Activated naive CD4-positive, alpha-beta T cell treated with anti-CD3 and anti-CD28 coated beads for 36 hours (primary cell): ENCODE measurements at regions of chr2 and their contacts with region 1.

Region 1: GRCh38 chr2:201071479-201072200 is at the starts of genes HYCC2 and NDUFB3:
- DNase-seq: peak; percentile 96
- H3K4me3 Mint-ChIP-seq: peak within 1 kb of the TSS; percentile 96
- H3K27ac Mint-ChIP-seq: peak within 1 kb of the TSS; percentile 92
- H3K4me1 Mint-ChIP-seq: peaks cover 51% of the 10 kb centered on the region
- H3K27me3 Mint-ChIP-seq: no peaks in the 10 kb centered on the region
- total RNA-seq, gene HYCC2: 19.1 TPM
- total RNA-seq, gene NDUFB3: 159 to 162 TPM

Region 2: GRCh38 chr2:200703127-200703925 is 368.3 kb before region 1 on chr2:
- CTCF ChIA-PET with region 1: interaction called, 3 read pairs
- intact Hi-C with region 1: loop called (anchors 2 kb)
- DNase-seq: peak; percentile 68
- H3K4me3 Mint-ChIP-seq: peak overlapping the region; percentile 19
- H3K27ac Mint-ChIP-seq: peak overlapping the region; percentile 83
- H3K4me1 Mint-ChIP-seq: peaks cover 55% of the 10 kb centered on the region
- H3K27me3 Mint-ChIP-seq: peaks cover 1% of the 10 kb centered on the region

Region 3: GRCh38 chr2:200901459-200902072 is 170.1 kb before region 1 on chr2:
- CTCF ChIA-PET with region 1: interaction called, 104 read pairs
- intact Hi-C with region 1: loop called (anchors 1 kb)
- DNase-seq: peak; percentile 89
- H3K4me3 Mint-ChIP-seq: no peak overlapping the region
- H3K27ac Mint-ChIP-seq: peak overlapping the region; percentile 84
- H3K4me1 Mint-ChIP-seq: peaks cover 7% of the 10 kb centered on the region
- H3K27me3 Mint-ChIP-seq: no peaks in the 10 kb centered on the region

Region 4: DNA sequence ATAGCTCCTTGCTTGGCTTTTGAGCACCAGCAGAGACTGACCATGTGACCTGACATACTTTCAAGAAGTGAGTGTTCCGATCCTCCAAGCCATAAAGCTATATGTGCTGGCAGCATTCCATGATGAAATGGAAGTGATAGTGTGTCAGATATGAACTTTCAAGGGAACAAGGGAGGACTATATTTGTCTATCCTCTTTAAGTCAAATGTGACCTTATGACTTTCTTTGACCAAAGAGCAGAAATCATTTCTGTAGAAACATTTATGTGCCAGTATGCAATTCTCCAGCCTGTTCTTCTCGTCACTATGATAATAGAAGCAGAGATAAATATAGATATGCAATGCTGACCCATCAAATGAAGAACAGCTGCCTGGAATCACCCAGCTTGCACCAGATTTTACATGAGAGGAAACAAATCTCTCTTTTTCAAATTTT is 14.5 kb before region 1 on chr2:
- CTCF ChIA-PET with region 1: interaction called, 15 read pairs
- intact Hi-C with region 1: no loop called
- DNase-seq: no peak
- H3K4me3 Mint-ChIP-seq: no peak overlapping the region
- H3K27ac Mint-ChIP-seq: no peak overlapping the region
- H3K4me1 Mint-ChIP-seq: peaks cover 21% of the 10 kb centered on the region
- H3K27me3 Mint-ChIP-seq: no peaks in the 10 kb centered on the region

Region 5: DNA sequence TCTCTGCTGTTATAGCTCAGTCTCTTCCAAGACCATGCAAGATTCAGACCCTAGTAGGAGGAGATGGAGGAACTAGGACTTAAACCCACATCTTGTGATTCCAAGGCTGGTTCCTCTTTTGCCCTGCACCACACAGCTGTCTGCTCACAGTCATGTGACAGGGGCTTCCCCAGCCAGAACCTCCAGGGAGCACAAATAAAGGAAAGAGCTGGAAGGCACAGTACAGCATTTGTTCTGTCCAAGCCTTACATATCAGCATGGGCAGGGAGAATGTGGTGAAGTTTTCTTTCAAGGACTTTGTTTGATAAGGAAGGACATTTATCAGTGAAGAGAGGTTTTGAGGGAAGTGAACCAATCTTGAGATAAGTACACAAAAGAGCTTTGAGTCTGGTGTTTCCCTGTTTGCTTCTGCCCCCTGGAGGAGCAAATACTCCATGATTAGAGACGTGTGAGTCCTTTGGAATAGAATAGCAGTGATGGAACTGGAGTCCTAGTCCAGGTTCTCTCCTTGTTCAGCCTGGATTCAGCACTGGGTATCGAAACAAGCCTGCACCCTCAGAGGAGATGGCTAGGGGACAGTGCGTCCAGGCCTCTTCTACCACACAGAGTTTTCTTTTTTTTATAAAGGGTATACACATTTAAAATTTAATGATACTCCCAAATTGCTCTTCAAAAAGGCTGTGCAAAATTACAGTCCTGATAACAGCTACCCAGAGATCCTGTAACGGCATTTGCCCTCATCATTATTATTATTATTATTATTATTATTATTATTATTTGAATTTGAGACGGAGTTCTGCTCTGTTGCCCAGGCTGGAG is 86.7 kb after region 1 on chr2:
- CTCF ChIA-PET with region 1: interaction called, 15 read pairs
- intact Hi-C with region 1: loop called (anchors 1 kb)
- DNase-seq: peak; percentile 76
- H3K4me3 Mint-ChIP-seq: no peak overlapping the region
- H3K27ac Mint-ChIP-seq: peak overlapping the region; percentile 86
- H3K4me1 Mint-ChIP-seq: peaks cover 24% of the 10 kb centered on the region
- H3K27me3 Mint-ChIP-seq: no peaks in the 10 kb centered on the region